GM10248 (cell line): ENCODE measurements at regions of chr12 and their contacts with region 1.

Region 1: DNA sequence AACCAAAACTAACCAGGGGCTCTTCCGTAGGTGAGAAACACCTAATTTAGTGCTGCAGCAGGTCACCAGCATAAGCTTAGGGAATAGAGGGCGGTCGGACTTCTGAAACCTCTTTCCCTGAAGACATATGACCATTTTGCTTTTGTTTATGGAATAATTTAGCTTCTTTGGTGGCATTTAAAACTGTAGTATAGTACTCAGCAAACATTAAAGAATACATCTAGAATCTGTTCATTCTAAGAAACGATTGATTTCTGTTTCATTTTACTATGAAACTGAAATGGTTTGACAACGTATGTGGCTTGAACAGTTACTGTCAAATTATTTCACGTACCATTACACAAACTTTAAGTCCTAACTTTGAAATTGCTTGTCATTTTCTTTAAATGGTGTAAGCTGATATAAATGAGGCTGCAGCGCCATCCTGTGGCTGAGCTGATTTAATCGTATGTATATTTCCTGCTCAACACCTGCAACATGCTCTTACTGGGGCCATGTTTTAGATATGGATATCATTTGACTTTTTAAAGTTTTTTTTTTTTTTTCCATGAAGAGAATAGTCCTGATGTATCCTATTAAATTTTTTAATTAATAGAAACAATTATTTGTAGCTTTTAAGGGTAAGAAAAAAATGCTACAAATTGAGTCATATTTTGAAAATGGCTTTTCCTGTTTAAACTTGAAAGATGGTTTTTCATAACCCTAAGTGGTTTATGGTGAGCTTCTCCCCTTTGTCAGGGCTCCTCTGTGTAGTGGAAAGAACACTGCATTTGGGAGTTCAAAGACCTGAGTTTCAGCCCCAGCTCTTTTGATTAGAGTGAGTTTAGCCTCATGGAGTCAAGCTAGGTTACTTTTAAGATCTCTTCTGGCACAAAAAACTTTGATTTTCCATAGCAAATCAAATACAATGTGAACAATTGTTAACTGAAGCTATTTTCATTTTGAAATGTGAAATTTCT is 27.4 kb downstream of the CFAP54 start:
- DNase-seq: peak; percentile 66
- CTCF ChIP-seq: peak; percentile 73

Region 2: DNA sequence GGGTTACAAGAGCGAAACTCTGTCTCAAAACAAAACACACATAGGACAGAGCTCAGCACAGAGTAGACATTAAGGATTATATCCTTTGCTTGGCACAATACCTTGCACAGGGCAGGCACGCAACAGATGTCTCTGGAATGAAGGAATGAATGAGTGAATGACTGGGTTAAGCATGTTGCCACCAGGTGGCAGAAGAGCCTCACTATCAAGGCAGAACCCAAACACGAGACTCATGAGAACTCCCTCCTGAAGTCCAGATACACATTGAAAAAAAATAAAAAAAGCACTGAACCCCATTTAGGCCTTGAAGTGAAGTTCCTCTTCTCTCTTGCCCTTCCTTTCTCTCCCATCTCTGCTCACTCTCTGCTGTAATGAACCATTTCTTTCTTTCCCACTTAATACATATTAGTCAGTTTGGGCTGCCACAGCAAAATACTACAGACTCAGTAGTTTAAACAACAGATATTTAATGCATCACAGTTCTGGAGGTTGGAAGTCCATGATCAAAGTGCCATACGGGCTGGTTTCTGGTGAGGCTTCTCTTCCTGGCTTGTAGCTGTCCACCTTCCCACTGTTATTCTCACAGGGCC is 454.8 kb before region 1 on chr12:
- CTCF ChIA-PET with region 1: interaction called, 83 read pairs
- POLR2A ChIA-PET with region 1: no interaction called
- DNase-seq: peak; percentile 74
- CTCF ChIP-seq: peak; percentile 73

Region 3: DNA sequence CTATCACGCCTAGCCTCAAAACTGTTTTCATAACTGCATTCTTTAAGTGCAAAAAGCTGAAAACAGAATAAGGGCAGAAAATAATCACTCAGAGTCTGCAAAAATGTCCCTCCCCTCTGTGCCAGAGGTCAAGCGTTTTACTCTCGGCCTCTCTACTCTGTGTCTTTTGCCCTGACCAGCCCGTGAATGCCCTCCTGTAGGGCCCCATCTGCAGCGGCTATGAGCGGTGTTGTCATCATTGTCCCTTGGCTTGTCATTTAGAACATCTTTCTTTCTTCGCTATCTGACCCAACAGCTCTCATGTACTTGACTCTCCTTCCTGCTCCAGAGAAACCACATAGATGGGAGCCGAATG is 300.9 kb before region 1 on chr12:
- CTCF ChIA-PET with region 1: interaction called, 23 read pairs
- POLR2A ChIA-PET with region 1: no interaction called
- DNase-seq: no peak
- CTCF ChIP-seq: no peak

Region 4: GRCh38 chr12:96489103-96490056 is 27.4 kb before region 1 on chr12 and contains the start of gene CFAP54:
- CTCF ChIA-PET with region 1: interaction called, 90 read pairs
- POLR2A ChIA-PET with region 1: no interaction called
- DNase-seq: peak; percentile 93
- CTCF ChIP-seq: peak; percentile 89

Region 5: DNA sequence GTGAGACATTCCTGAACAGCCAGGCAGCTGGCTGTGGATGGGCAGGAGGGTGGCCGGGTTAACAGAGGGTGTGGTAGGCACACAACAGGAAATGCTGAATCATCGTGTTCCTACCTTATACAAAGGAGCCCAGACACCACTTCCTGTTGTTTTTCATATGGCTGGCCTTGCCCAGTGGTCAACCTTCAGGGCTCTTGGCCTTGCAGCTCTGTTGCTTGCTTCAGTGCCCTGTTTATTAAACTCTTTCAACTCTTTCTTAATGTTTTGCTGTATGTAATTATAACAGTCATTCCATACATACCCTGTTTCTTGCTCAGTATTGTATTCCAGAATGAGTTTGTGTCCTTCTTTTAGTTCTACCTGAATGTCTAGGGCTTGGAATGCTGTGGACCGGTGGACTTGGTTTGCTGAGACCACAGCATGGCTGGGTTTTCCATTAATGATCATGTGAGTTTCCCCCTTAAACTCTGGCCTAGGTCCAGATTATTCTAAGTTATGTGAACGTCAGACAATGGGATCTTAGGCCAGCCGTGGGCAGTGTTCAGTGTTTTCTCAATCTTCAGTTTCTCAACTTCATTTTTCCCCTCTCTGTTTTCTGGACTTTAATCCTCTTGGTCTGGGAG is 15.5 kb before region 1 on chr12:
- CTCF ChIA-PET with region 1: interaction called, 36 read pairs
- POLR2A ChIA-PET with region 1: no interaction called
- DNase-seq: peak; percentile 30
- CTCF ChIP-seq: no peak

Region 6: DNA sequence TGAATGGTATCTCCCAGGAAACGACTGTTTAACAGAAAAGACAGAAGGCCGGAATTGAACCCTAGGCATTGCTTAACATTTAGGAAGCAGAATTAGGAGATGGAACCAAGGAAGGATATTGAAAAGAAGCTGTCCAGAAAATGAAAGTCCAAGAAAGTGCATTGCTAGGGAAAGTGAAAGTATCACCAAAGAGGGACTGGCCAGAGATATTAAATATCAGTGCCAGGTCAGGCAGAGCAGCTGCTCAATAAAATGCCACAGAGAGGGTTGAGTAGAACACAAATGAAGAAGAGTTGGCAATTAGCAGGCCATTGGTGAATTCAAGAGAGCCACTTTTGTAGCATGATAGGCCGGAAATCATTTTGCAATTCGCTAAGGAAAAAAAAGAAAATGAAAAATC is 74.2 kb after region 1 on chr12:
- CTCF ChIA-PET with region 1: no interaction called
- POLR2A ChIA-PET with region 1: no interaction called
- DNase-seq: no peak
- CTCF ChIP-seq: no peak